Calu3 (cell line): ENCODE measurements at regions of chrX and their contacts with region 1.

Region 1: GRCh38 chrX:140918407-140919038 is 83.9 kb upstream of the SPANXB1 start:
- DNase-seq: peak; percentile 6
- H3K4me3 Mint-ChIP-seq: no peak overlapping the region
- H3K27ac Mint-ChIP-seq: no peak overlapping the region
- H3K4me1 Mint-ChIP-seq: no peaks in the 10 kb centered on the region
- H3K27me3 Mint-ChIP-seq: no peaks in the 10 kb centered on the region
- CTCF ChIP-seq: peak; percentile 33

Region 2: GRCh38 chrX:141278302-141278701 is 359.8 kb after region 1 on chrX:
- CTCF ChIA-PET with region 1: interaction called, 10 read pairs
- intact Hi-C with region 1: loop called (anchors 1 kb)
- DNase-seq: peak; percentile 1
- H3K4me3 Mint-ChIP-seq: no peak overlapping the region
- H3K27ac Mint-ChIP-seq: no peak overlapping the region
- H3K4me1 Mint-ChIP-seq: no peaks in the 10 kb centered on the region
- H3K27me3 Mint-ChIP-seq: no peaks in the 10 kb centered on the region
- CTCF ChIP-seq: no peak